ENCODE measurements at regions of chr4 and their contacts with region 1.

Region 1: DNA sequence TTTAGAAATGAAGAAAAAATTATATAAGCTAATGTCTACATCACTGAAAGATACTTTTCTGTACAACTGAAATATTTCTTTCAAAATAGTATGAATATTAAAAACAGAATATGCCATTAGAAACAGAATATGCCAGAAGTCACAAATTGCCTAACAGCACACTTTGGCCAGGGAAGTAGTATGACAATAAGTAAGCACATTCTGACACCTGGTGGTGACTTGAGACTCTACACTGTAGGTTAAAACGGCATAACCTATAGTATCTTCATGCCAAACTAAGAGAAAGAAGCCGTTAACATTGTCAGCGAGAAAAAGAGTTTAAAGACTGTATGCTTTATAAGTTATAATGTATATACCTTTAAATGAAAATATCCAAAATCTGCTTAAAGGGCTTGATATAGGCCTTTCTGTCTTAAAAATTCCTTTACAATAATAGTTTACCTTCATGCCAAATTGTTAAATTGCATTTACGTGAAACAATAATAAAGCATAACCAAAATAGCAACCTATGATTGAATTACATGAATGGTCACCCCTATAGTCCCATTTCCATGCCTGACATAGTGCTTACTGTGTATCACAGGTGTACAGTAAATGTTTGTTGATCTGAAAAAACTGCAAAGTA is 32.8 kb downstream of the FAM13A start:
- DNase-seq: peak; percentile 58
- ATAC-seq: peak; percentile 91
- H3K4me3 Mint-ChIP-seq: no peak overlapping the region
- H3K27ac Mint-ChIP-seq: no peak overlapping the region
- H3K4me1 Mint-ChIP-seq: peaks cover 4% of the 10 kb centered on the region
- H3K27me3 Mint-ChIP-seq: peaks cover 2% of the 10 kb centered on the region

Region 2: GRCh38 chr4:88816360-88816759 is 207.8 kb before region 1 on chr4:
- CTCF ChIA-PET with region 1: interaction called, 106 read pairs
- POLR2A ChIA-PET with region 1: no interaction called
- intact Hi-C with region 1: loop called (anchors 1 kb)
- DNase-seq: no peak
- ATAC-seq: no peak
- H3K4me3 Mint-ChIP-seq: no peak overlapping the region
- H3K27ac Mint-ChIP-seq: no peak overlapping the region
- H3K4me1 Mint-ChIP-seq: peaks cover 19% of the 10 kb centered on the region
- H3K27me3 Mint-ChIP-seq: no peaks in the 10 kb centered on the region

Measured in activated CD4-positive, alpha-beta T cell treated with anti-CD3 and anti-CD28 coated beads for 36 hours (primary cell).